Gastrocnemius medialis (tissue), 4 donors: ENCODE measurements at regions of chr3 and their contacts with region 1.

Region 1: GRCh38 chr3:17431004-17431403 is 311.4 kb downstream of the TBC1D5 start:
- DNase-seq: no peak
- ATAC-seq: peak; percentile 66 to 77
- H3K4me3 ChIP-seq: no peak overlapping the region
- H3K27ac ChIP-seq: no peak overlapping the region
- H3K4me1 ChIP-seq: peaks cover 8 to 10% of the 10 kb centered on the region in 2 donors
- H3K27me3 ChIP-seq: no peaks in the 10 kb centered on the region
- CTCF ChIP-seq: peak; percentile 20 to 52 (median 44)
- POLR2A ChIP-seq: no peak

Region 2: DNA sequence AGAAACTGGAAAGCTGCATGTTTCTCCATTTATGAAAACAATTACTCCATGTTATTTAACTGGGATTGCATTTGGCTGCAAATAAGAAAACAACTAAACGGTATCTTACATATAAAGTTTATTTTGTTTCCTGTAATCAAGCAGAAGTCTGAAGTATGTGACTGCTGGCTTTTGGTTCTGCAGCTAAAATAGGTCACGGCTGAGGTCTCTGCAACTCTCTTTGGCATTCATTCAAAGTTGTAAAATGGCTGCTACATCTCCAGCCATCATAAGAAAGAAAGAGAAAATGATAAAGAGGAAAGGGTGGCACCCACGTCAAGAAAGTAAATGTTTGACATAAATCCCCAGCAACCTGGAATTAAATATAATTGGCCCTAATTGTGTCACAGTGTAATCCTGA is 94.7 kb before region 1 on chr3:
- in situ Hi-C with region 1: loop called in 1 of 4 experiments (anchors 25 kb)
- intact Hi-C with region 1: no loop called
- DNase-seq: no peak
- ATAC-seq: no peak
- H3K4me3 ChIP-seq: no peak overlapping the region
- H3K27ac ChIP-seq: no peak overlapping the region
- H3K4me1 ChIP-seq: peaks cover 0 to 5% of the 10 kb centered on the region in 2 donors
- H3K27me3 ChIP-seq: no peaks in the 10 kb centered on the region
- CTCF ChIP-seq: no peak
- POLR2A ChIP-seq: no peak

Region 3: DNA sequence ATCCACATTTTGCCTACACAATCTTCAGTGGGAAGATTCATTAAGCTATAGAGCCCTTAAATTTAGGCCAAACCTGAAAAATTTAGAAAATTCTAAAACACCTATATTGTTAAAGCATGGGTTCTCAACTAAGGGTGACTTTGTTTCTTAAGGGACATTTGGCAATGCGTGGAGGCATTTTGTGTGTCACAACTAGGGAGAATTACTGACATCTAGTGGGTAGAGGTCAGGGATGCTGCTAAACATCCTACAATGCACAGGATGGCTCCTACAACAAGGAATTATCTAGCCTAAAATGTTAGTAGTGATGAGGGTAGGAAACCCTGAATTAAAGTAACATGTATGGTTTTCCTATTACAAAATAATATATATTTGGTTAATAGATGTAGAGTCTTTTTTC is 255.6 kb after region 1 on chr3:
- in situ Hi-C with region 1: no loop called
- intact Hi-C with region 1: loop called (anchors 1 kb)
- DNase-seq: no peak
- ATAC-seq: peak in 1 of 2 donors; percentile 47
- H3K4me3 ChIP-seq: no peak overlapping the region
- H3K27ac ChIP-seq: no peak overlapping the region
- H3K4me1 ChIP-seq: no peaks in the 10 kb centered on the region
- H3K27me3 ChIP-seq: no peaks in the 10 kb centered on the region
- CTCF ChIP-seq: peak in 1 of 5 experiments; percentile 37
- POLR2A ChIP-seq: no peak

Region 4: GRCh38 chr3:17831366-17831765 is 400.4 kb after region 1 on chr3:
- in situ Hi-C with region 1: loop called in 3 of 4 experiments (anchors 5 to 10 kb)
- intact Hi-C with region 1: no loop called
- DNase-seq: no peak
- ATAC-seq: no peak
- H3K4me3 ChIP-seq: no peak overlapping the region
- H3K27ac ChIP-seq: no peak overlapping the region
- H3K4me1 ChIP-seq: peaks cover 0 to under 1% of the 10 kb centered on the region in 2 donors
- H3K27me3 ChIP-seq: peaks cover 0 to 6% (median 0%) of the 10 kb centered on the region in 3 donors
- CTCF ChIP-seq: no peak
- POLR2A ChIP-seq: no peak